Activated B cell treated with CpG ODN at 0.5 μM for 24 hours (primary cell): ENCODE measurements at regions of chr14 and their contacts with region 1.

Region 1: DNA sequence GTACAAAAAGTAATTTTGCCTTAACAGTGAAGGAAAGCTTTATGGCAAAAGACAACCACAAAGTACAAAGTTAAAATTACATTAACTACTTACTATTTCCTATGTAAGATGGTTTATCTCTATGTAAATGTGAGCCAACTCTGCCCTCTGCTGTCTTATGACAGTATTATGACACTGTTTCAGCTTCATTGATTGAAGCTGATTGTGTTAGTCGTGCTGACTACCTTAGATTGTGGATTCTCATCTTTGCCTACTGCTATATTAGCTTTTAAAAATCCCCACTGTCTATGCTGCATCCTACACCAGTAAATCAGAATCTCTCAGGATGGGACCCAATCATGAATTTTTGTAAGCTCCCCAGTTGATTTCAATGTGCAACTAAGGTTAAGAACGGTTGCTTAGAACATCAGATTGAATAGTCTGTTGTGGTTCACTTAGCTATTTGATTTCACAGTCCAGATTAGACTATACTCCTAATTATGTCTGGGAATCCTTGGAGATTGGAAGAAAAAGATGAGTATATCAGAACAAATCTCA is 12.2 kb upstream of the SPTB start:
- DNase-seq: no peak
- ATAC-seq: peak; percentile 71
- H3K4me3 Mint-ChIP-seq: no peak overlapping the region
- H3K27ac Mint-ChIP-seq: no peak overlapping the region
- H3K4me1 Mint-ChIP-seq: no peaks in the 10 kb centered on the region
- H3K27me3 Mint-ChIP-seq: peaks cover 22% of the 10 kb centered on the region
- CTCF ChIP-seq: no peak

Region 2: GRCh38 chr14:63032076-63032475 is 1859.8 kb before region 1 on chr14:
- CTCF ChIA-PET with region 1: no interaction called
- POLR2A ChIA-PET with region 1: no interaction called
- intact Hi-C with region 1: no loop called
- DNase-seq: no peak
- ATAC-seq: no peak
- H3K4me3 Mint-ChIP-seq: no peak overlapping the region
- H3K27ac Mint-ChIP-seq: no peak overlapping the region
- H3K4me1 Mint-ChIP-seq: no peaks in the 10 kb centered on the region
- H3K27me3 Mint-ChIP-seq: no peaks in the 10 kb centered on the region
- CTCF ChIP-seq: no peak

Region 3: GRCh38 chr14:63478010-63478409 is 1413.9 kb before region 1 on chr14:
- CTCF ChIA-PET with region 1: no interaction called
- POLR2A ChIA-PET with region 1: no interaction called
- intact Hi-C with region 1: no loop called
- DNase-seq: no peak
- ATAC-seq: peak; percentile 79
- H3K4me3 Mint-ChIP-seq: peak overlapping the region; percentile 12
- H3K27ac Mint-ChIP-seq: peak overlapping the region; percentile 54
- H3K4me1 Mint-ChIP-seq: peaks cover 46% of the 10 kb centered on the region
- H3K27me3 Mint-ChIP-seq: no peaks in the 10 kb centered on the region
- CTCF ChIP-seq: no peak

Region 4: GRCh38 chr14:64671591-64671990 is 220.3 kb before region 1 on chr14:
- CTCF ChIA-PET with region 1: interaction called, 18 read pairs
- POLR2A ChIA-PET with region 1: no interaction called
- intact Hi-C with region 1: loop called (anchors 2 kb)
- DNase-seq: no peak
- ATAC-seq: no peak
- H3K4me3 Mint-ChIP-seq: no peak overlapping the region
- H3K27ac Mint-ChIP-seq: no peak overlapping the region
- H3K4me1 Mint-ChIP-seq: peaks cover 4% of the 10 kb centered on the region
- H3K27me3 Mint-ChIP-seq: peaks cover 18% of the 10 kb centered on the region
- CTCF ChIP-seq: no peak

Region 5: DNA sequence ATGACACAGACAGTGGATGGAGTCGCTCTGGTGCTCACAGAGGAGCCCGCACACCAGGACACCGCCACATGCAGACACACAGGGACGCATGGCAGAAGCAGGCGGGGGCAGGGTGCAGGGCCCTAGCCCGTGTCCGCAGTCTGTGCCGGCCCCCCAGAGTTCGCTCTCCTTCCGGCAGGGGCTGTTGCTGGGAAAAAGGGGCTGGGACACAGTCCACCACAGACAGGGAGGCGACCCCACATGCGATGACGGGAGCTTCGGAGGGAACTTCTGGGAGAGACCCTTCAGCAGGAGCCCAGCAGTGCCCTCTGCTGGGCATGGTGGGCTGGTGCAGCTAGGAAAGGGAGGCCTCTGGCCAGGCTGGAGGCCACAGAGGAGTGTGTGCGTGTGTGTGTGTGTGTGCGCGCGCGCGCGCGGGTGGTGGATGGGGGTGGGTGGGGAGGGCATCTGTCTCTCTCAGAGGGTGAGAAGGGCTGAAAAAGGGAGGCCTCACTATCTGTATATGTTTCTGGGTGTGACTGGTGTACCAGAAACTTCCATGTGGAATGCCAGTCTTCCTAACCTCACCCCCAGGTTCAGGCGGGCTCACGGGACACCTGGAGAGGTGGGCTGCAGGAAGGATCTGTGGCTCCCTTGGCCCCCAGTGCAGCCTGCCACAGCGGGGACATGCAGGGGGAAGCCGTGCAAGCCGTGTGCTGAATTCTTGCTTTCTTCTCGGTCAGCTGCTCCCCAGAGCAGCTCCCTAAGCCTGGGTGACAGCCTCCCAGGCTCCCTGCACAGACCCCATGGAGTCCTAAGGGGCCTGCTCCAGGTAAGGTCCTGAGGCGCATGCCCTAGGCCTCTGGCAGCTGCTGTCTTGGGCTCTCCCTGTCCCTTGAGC is 127.0 kb before region 1 on chr14:
- CTCF ChIA-PET with region 1: interaction called, 5 read pairs
- POLR2A ChIA-PET with region 1: no interaction called
- intact Hi-C with region 1: loop called (anchors 2 kb)
- DNase-seq: peak; percentile 49
- ATAC-seq: peak; percentile 66
- H3K4me3 Mint-ChIP-seq: peak overlapping the region; percentile 59
- H3K27ac Mint-ChIP-seq: no peak overlapping the region
- H3K4me1 Mint-ChIP-seq: peaks cover 14% of the 10 kb centered on the region
- H3K27me3 Mint-ChIP-seq: peaks cover 15% of the 10 kb centered on the region
- CTCF ChIP-seq: no peak

Region 6: GRCh38 chr14:64800000-64800399 is 91.9 kb before region 1 on chr14:
- CTCF ChIA-PET with region 1: interaction called, 41 read pairs
- POLR2A ChIA-PET with region 1: no interaction called
- intact Hi-C with region 1: loop called (anchors 2 kb)
- DNase-seq: no peak
- ATAC-seq: no peak
- H3K4me3 Mint-ChIP-seq: no peak overlapping the region
- H3K27ac Mint-ChIP-seq: no peak overlapping the region
- H3K4me1 Mint-ChIP-seq: no peaks in the 10 kb centered on the region
- H3K27me3 Mint-ChIP-seq: peaks cover 13% of the 10 kb centered on the region
- CTCF ChIP-seq: no peak

Region 7: DNA sequence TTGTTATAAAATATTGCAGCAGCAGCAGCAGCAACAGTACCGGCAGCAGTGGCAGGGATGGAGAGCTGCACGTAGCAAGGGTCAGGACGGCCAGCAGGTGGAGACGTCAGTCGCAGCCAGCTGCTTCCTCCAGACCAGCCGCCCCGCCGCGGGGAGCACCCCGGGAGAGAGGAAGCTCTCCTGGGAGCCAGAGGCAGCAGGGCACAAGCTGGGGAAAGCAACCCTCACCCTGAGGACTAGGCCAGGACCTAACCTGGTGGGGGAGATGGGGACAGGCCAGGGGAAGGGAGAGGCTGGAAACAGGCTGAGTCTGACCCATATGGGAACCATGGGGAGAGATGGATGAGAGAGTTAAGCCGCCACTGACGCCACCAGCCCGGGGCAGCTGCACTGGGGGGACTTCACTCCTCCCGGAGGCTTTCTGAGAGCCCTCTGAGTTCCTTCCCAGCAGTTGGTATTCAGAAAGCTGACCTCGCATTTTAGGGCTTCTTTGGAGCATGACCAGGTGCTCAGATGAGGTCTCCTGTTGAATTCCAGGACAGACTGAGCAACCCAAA is 68.5 kb before region 1 on chr14:
- CTCF ChIA-PET with region 1: interaction called, 118 read pairs
- POLR2A ChIA-PET with region 1: no interaction called
- intact Hi-C with region 1: loop called (anchors 2 kb)
- DNase-seq: peak; percentile 46
- ATAC-seq: peak; percentile 81
- H3K4me3 Mint-ChIP-seq: peak overlapping the region; percentile 42
- H3K27ac Mint-ChIP-seq: no peak overlapping the region
- H3K4me1 Mint-ChIP-seq: peaks cover 4% of the 10 kb centered on the region
- H3K27me3 Mint-ChIP-seq: peaks cover 20% of the 10 kb centered on the region
- CTCF ChIP-seq: no peak

Region 8: DNA sequence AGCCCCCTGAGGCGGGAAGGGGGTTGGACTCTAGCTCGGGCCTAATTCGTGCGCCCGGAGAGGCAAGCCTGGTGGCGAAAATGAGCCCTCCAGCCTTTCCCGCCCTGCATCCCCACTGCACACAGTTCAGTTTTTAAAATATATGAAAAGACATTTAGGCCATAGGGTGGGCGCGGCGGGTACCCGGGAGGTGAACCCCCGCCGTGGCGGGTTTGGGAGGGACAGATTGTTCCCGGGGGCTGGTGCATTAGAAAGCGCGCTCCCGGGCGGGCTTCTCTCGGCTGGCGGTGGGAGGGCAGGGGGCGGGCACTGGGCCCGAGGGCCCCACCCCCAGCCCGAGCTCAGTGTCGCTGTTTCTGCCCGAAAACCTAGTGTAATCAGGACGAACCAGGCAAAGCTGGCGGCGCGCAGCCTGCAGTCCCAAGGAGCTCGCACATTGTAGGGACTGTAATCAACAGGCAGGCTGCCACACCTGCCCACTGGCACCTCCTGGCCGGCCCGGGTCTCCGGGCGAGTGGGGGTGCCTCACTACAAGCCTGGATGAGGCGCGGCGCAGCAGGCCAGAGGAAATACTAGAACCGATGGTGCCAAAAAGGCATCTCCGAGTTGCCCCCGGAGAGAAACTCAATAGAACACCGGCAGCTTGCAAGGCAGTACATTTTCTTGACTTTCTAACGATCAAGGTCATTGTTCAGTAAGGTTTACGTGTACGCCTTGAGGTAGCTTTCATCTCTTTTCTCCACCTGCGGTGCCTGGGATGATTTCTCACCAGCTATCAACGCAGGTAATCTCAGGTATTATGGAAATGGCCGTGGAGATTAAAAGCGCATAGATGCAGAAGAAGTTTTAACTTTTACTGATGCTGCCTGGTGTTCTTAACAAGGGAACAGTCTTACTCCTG is 11.4 kb before region 1 on chr14:
- CTCF ChIA-PET with region 1: interaction called, 45 read pairs
- POLR2A ChIA-PET with region 1: no interaction called
- intact Hi-C with region 1: no loop called
- DNase-seq: peak; percentile 49
- ATAC-seq: peak; percentile 80
- H3K4me3 Mint-ChIP-seq: peak overlapping the region; percentile 83
- H3K27ac Mint-ChIP-seq: no peak overlapping the region
- H3K4me1 Mint-ChIP-seq: peaks cover 8% of the 10 kb centered on the region
- H3K27me3 Mint-ChIP-seq: peaks cover 42% of the 10 kb centered on the region
- CTCF ChIP-seq: no peak